Heart left ventricle (tissue), 16 donors: ENCODE measurements at regions of chr1 and their contacts with region 1.

Region 1: GRCh38 chr1:99550198-99550597 is 95.7 kb upstream of the PALMD start:
- DNase-seq: no peak
- ATAC-seq: no peak
- H3K4me3 ChIP-seq: no peak overlapping the region
- H3K27ac ChIP-seq: no peak overlapping the region
- H3K4me1 ChIP-seq: peaks cover 0 to 17% (median 9%) of the 10 kb centered on the region in 12 donors
- H3K27me3 ChIP-seq: no peaks in the 10 kb centered on the region
- CTCF ChIP-seq: no peak
- POLR2A ChIP-seq: no peak

Region 2: DNA sequence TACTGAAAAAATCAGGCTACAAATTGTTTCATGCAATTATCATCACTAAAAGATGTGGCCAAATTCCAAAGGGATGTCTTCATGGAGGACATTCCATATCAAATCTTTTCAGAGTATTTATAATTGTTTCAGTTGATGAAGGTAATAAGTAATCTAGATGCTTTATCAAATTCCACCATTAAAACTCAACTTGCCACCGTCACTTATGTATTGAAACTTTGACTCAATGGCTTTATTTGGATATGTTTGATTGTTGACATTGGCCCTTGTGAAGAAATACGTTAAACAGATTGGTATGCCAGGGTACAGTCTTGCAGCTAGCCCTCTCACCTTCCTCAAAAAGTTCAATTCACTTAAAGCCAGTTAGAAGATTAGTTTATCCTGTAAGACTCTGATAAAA is 63.5 kb after region 1 on chr1:
- intact Hi-C with region 1: no loop called
- DNase-seq: no peak
- ATAC-seq: no peak
- H3K4me3 ChIP-seq: no peak overlapping the region
- H3K27ac ChIP-seq: no peak overlapping the region
- H3K4me1 ChIP-seq: no peaks in the 10 kb centered on the region
- H3K27me3 ChIP-seq: no peaks in the 10 kb centered on the region
- CTCF ChIP-seq: no peak
- POLR2A ChIP-seq: no peak

Region 3: GRCh38 chr1:99634971-99635624 is 84.9 kb after region 1 on chr1:
- intact Hi-C with region 1: loop called in 1 of 10 experiments (anchors 5 kb)
- DNase-seq: no peak
- ATAC-seq: no peak
- H3K4me3 ChIP-seq: no peak overlapping the region
- H3K27ac ChIP-seq: peak overlapping the region in 4 of 12 donors; percentile 0 to 41 (median 10)
- H3K4me1 ChIP-seq: peaks cover 0 to 33% (median 13%) of the 10 kb centered on the region in 12 donors
- H3K27me3 ChIP-seq: no peaks in the 10 kb centered on the region
- CTCF ChIP-seq: no peak
- POLR2A ChIP-seq: no peak

Region 4: DNA sequence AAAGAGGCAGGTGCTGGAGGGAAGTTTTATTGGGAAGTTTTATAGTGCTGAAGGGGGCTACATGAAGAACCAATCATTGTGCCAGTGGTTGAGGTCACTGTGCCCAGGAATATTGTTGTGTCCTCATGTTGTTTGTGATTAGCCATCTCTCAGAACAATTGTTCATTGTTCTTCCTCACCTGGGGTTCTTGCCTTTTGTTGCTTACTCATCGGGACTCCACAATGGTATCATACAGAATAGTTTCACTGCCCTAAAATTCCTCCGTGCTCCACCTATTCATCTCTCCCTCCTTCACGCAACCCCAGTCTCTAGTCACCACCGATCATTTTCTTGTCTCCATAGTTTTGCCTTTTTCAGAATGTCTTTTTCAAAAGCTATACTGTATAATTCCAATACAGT is 763.2 kb after region 1 on chr1:
- intact Hi-C with region 1: no loop called
- DNase-seq: no peak
- ATAC-seq: no peak
- H3K4me3 ChIP-seq: no peak overlapping the region
- H3K27ac ChIP-seq: no peak overlapping the region
- H3K4me1 ChIP-seq: peaks cover 0 to 4% (median 0%) of the 10 kb centered on the region in 12 donors
- H3K27me3 ChIP-seq: no peaks in the 10 kb centered on the region
- CTCF ChIP-seq: no peak
- POLR2A ChIP-seq: no peak